Activated CD4-positive, alpha-beta memory T cell treated with anti-CD3 and anti-CD28 coated beads, Interleukin-2, amount 10 ng/mL, durations not matched to agents 7 days and 5 days (primary cell): ENCODE measurements at regions of chr7 and their contacts with region 1.

Region 1: GRCh38 chr7:37342688-37343471 is 105.8 kb downstream of the ELMO1 start:
- DNase-seq: peak; percentile 78
- H3K4me3 Mint-ChIP-seq: peak overlapping the region; percentile 91
- H3K27ac Mint-ChIP-seq: peak overlapping the region; percentile 98
- H3K4me1 Mint-ChIP-seq: peaks cover 65% of the 10 kb centered on the region
- H3K27me3 Mint-ChIP-seq: no peaks in the 10 kb centered on the region

Region 2: DNA sequence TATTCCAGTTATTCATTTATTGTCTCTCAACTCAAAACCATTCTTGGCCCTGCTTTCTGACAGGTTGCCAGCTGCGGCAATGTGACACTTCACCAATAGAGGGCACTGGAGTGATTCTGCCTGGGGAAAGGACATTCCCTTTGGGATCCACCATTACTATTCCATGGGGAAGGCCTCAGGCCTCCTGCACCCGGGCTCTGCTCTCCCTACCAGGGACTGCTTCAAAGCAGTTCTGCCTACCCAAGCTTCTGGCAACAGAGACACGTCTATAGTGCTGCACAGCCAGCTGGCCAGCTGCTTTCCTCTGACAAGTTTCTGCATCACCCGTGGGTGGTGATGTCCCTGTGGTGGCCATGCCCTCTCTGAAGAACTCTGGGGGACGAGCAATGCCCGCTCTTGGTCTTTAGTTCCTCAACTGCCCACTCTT is 58.1 kb before region 1 on chr7:
- CTCF ChIA-PET with region 1: interaction called, 20 read pairs
- POLR2A ChIA-PET with region 1: no interaction called
- DNase-seq: peak; percentile 42
- H3K4me3 Mint-ChIP-seq: no peak overlapping the region
- H3K27ac Mint-ChIP-seq: no peak overlapping the region
- H3K4me1 Mint-ChIP-seq: peaks cover 37% of the 10 kb centered on the region
- H3K27me3 Mint-ChIP-seq: no peaks in the 10 kb centered on the region

Region 3: GRCh38 chr7:37311355-37311754 is 31.5 kb before region 1 on chr7:
- CTCF ChIA-PET with region 1: interaction called, 4 read pairs
- POLR2A ChIA-PET with region 1: interaction called, 11 read pairs
- DNase-seq: peak; percentile 26
- H3K4me3 Mint-ChIP-seq: no peak overlapping the region
- H3K27ac Mint-ChIP-seq: peak overlapping the region; percentile 83
- H3K4me1 Mint-ChIP-seq: peaks cover 64% of the 10 kb centered on the region
- H3K27me3 Mint-ChIP-seq: no peaks in the 10 kb centered on the region